ENCODE measurements at regions of chr7 and their contacts with region 1.

Region 1: DNA sequence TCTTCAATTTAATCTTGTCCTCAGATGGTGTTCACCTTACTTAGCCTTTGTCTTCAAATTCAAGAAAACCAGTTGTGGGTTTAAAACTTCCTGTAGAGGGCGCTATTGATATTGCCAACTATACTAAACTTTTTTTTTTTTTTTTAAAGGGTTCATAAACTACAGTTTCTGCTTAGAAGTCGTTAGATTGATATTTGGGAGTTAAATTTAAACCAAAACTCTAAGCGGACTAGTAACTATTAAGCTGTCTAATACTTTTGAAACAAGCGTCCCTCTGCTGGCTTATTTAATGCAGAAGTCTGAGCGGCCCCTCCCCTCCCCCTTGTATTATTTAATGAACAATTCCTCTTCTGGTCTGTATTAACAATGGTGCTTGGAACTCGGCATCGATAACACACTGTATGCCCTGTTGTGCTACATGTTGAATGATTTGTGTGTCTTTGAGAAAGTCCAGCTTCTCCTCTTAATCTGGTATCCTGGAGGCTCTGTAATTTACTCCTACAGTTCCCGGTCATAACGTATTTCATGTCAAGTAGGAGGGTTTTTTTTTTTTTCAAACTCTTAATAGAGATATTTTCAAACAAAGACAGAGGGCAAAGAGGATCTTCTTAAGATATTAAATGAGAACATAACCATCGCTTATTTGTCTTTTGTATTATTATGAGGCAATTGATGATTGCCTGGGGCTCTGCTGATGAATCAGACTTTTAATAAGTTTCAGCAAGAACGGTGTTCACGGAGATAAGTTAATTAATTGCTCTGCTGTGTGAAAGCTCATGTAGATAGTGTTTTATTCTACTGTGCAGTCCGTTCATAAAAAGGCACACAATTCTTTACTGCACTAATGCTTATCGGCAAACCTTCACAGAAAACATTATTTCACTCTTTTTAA is 22.6 kb upstream of the CREB5 start:
- DNase-seq: peak; percentile 13 to 52 (median 42)
- ATAC-seq: no peak
- H3K4me3 ChIP-seq: no peak overlapping the region
- H3K27ac ChIP-seq: no peak overlapping the region
- H3K4me1 ChIP-seq: no peaks in the 10 kb centered on the region
- H3K27me3 ChIP-seq: no peaks in the 10 kb centered on the region
- CTCF ChIP-seq: peak; percentile 39 to 79 (median 63); a peak in 5 of 6 replicates
- EP300 ChIP-seq: no peak
- POLR2A ChIP-seq: no peak
- RAD21 ChIP-seq: peak; percentile 52 to 63

Region 2: GRCh38 chr7:28155019-28155660 is 234.6 kb before region 1 on chr7:
- CTCF ChIA-PET with region 1: no interaction called
- POLR2A ChIA-PET with region 1: no interaction called
- in situ Hi-C with region 1: no loop called
- intact Hi-C with region 1: no loop called
- DNase-seq: no peak
- ATAC-seq: no peak
- H3K4me3 ChIP-seq: no peak overlapping the region
- H3K27ac ChIP-seq: no peak overlapping the region
- H3K4me1 ChIP-seq: no peaks in the 10 kb centered on the region
- H3K27me3 ChIP-seq: peaks cover 2 to 5% of the 10 kb centered on the region in 2 experiments; a peak in 3 of 5 replicates
- CTCF ChIP-seq: no peak
- EP300 ChIP-seq: no peak
- POLR2A ChIP-seq: no peak
- RAD21 ChIP-seq: no peak

Region 3: GRCh38 chr7:28217143-28217542 is 172.6 kb before region 1 on chr7:
- CTCF ChIA-PET with region 1: no interaction called
- POLR2A ChIA-PET with region 1: no interaction called
- in situ Hi-C with region 1: no loop called
- intact Hi-C with region 1: no loop called
- DNase-seq: no peak
- ATAC-seq: no peak
- H3K4me3 ChIP-seq: no peak overlapping the region
- H3K27ac ChIP-seq: no peak overlapping the region
- H3K4me1 ChIP-seq: no peaks in the 10 kb centered on the region
- H3K27me3 ChIP-seq: no peaks in the 10 kb centered on the region
- CTCF ChIP-seq: no peak
- EP300 ChIP-seq: no peak
- POLR2A ChIP-seq: no peak
- RAD21 ChIP-seq: no peak

Region 4: DNA sequence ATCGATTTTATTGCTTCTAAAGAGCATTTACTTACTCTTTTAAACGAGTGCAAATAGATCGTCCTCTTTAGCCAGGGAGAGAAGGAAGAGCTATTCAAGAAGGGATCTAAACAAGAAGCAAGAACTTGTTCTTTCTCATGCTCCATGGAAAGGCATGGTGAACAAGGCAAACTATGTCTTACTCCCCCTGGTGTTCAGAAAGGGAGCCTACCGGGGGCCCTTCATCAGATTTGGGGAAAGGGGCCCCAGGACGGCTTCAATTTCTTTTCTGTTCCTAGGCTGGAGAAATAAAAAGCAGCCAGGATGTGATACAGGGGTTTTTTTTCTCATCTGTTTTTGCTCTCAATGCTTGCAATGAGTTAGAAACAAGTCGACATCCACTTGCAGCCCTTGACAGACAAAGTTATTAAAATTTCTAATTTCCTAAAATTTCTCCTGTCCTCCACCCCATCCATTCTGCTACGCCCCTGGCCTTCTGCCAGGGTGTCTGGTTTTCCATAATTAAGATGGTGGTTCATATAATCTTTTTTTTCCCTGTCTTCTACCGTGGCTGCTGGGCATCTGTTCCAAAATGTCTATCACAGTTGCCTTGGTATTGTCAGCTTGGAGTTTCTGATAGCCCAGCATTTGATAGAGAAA is 237.0 kb after region 1 on chr7:
- CTCF ChIA-PET with region 1: interaction called, 6 read pairs
- POLR2A ChIA-PET with region 1: no interaction called
- in situ Hi-C with region 1: loop called (anchors 10 kb)
- intact Hi-C with region 1: loop called (anchors 1 kb)
- DNase-seq: peak; percentile 45 to 60 (median 55)
- ATAC-seq: peak; percentile 78
- H3K4me3 ChIP-seq: no peak overlapping the region
- H3K27ac ChIP-seq: no peak overlapping the region
- H3K4me1 ChIP-seq: no peaks in the 10 kb centered on the region
- H3K27me3 ChIP-seq: no peaks in the 10 kb centered on the region
- CTCF ChIP-seq: peak; percentile 59 to 61 (median 61)
- EP300 ChIP-seq: no peak
- POLR2A ChIP-seq: no peak
- RAD21 ChIP-seq: peak; percentile 26 to 46; a peak in 3 of 4 replicates